Cardiac septum (tissue), 1 donor: ENCODE measurements at regions of chr7 and their contacts with region 1.

Region 1: GRCh38 chr7:191981-192649 is at the start of gene FAM20C:
- DNase-seq: peak; percentile 89
- total RNA-seq, gene FAM20C: 30.2 TPM

Region 2: DNA sequence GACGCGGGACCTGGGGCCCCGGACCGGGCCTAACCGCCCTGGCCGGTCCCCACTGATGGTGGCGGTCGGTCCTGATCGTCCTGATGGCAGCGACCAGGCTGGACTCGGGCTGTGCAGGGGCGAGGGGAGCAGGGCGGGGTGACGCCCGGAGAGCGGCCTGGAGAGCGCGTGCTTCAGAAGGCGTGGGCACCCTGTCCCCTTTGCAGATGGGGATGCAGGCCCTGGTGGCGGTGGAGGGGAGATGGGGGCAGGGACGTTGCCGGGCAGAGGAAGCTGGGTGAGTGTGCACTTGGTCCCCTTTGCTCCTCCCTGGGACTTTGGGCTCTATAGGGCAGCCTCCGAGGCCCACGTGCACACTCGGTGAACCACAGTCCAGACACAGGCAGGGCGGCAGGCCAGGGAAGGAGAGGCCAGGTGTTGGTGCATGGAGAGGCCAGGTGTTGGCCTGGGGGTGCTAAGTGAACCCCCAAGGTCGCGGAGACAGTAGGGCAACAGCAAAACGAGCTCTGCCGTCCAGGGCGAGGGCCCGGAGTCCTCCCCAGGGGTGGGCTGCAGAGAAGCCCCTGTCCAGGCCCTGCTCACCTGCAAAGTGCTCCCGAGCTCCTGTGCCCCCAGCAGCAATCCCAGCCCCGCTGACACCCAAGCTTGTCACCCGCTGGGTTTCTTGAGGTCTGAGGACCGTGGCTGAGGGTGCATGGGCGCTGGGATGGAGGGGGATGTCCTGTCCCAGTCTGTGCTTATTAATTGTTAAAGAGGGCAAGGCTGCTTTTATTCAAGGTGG is 42.1 kb before region 1 on chr7:
- intact Hi-C with region 1: loop called (anchors 2 kb)
- DNase-seq: no peak

Region 3: DNA sequence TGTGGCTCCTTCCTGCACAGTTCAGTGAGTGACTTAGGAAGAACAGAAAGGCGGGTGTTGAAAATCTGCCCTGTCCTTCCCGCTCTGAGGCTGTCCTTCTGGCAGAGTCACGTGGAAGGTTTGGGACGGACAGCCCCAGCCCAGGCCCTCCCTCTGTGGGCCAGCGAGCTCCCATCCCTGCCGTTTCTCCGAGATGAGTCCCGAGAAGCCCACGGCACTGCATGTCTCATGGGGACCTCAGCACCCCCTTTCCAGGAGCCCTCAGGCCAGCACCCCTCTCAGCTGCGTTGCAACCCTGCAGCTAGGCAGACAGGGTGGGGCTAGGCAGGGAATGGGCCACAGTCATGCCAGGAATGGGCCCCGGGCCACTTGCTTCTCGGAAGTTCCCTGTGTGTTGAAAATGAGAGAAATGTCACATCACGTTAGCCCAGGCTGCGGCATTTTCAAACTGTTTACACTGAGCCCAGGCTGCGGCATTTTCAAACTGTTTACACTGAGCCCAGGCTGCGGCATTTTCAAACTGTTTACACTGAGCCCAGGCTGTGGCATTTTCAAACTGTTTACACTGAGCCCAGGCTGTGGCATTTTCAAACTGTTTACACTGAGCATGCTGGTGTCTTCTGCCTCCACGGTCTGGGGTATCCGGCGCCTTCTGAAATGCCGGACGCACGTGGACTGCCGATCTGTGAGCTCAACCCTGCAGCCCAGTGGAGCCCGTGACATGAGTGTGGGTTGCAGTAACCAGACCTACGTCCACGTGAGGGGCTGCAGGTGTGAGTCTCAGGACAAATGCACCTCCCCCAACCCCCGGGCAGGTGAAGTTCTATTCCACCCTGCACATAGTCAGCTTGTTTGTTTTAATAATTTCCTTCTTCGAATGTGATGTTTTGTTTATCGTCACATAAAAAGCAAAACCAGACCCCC is 42.8 kb after region 1 on chr7:
- intact Hi-C with region 1: loop called (anchors 5 kb)
- DNase-seq: no peak

Region 4: DNA sequence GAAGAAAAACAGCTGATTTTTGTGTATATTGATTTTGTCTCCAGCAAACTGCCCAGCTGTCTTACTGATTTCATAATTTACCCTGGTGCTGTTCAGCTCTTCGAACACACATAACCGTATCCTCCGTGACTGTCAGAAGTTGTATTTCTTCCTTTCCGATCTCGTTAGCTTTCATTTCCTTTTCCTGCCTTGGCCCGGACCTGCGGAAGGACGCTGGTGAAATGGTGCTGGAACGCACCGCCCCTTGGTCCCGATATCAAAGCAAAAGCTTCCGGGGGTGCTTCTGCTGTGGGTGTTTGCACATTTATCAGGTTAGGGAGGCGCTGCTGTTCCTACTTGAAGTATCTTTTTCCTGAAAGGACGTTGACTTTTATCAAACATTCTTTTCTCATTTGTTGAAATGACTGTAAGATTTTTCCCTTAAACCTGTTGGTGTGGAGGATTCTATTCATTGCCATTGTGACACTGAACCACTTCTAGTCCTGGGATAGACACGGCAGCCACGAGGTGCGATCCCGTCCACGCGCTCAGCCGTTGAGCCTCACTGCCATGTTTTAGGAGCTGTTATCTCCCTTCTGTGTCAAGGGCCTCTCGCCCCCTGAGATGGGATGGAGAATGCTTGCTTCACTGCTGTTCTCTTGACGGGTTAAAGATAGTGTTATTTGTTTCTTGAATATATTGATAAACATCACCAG is 170.4 kb after region 1 on chr7:
- intact Hi-C with region 1: no loop called
- DNase-seq: no peak

Region 5: GRCh38 chr7:712381-713138 is 520.4 kb after region 1 on chr7:
- intact Hi-C with region 1: no loop called
- DNase-seq: no peak